ENCODE measurements at regions of chr2 and their contacts with region 1.

Region 1: DNA sequence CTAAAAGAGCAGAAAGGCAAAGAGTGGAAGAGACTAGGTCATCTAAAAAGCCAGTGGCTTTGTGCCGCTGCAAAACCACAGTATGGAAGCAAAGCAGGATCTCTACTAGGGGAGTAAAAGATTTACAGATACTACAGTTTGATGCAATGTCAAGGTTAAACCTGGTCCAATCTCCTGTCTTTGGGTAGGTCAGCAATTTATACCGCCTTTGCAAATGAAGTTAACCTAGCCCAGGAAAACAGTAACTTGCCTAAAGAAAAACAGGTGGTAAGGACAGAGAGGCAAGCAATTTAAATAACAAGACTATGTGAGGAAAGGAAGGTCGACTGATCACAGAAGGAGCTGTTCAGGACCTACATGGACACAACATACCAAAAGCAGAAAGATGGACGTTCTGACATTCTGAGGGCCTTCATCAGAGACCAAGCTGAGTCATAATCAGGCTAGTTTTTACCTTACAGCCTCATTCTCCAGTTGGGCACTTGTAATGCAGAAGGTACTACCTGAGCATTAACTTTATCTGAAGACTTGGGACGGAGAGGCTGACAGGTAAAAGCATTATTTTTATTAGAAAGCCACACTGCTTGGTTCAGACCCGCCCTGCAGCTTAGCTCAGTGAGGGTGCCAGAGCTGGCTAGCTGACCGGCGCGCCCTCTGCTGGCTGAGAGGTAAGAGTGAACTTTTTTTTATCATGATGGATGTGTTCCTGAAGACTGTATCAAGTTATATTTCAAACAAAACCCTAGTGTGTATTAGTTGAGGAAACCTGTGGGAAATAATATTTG is 15.9 kb downstream of the CDKL4 start:
- DNase-seq: peak; percentile 92
- ATAC-seq: peak; percentile 86

Region 2: GRCh38 chr2:38947240-38948239 is 280.3 kb before region 1 on chr2:
- intact Hi-C with region 1: loop called (anchors 1 kb)
- DNase-seq: peak; percentile 76
- ATAC-seq: peak; percentile 63

Region 3: DNA sequence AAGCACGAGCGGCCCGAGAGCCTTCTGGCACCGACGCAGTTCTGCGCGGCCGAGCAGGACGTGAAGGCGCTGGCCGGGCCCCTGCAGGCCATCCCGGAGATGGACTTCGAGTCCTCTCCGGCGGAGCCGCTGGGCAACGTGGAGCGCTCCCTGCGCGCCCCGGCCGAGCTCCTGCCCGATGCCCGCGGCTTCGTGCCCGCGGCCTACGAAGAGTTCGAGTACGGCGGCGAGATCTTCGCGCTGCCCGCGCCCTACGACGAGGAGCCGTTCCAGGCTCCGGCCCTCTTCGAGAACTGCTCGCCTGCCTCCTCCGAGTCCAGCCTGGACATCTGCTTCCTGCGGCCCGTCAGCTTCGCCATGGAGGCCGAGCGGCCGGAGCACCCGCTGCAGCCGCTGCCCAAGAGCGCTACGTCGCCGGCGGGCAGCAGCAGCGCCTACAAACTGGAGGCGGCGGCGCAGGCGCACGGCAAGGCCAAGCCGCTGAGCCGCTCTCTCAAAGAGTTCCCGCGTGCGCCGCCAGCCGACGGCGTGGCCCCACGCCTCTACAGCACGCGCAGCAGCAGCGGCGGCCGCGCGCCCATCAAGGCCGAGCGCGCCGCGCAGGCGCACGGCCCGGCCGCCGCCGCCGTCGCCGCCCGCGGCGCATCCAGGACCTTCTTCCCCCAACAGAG is 267.7 kb before region 1 on chr2:
- intact Hi-C with region 1: no loop called
- DNase-seq: peak; percentile 93
- ATAC-seq: peak; percentile 96

Region 4: GRCh38 chr2:39059366-39059952 is 168.4 kb before region 1 on chr2:
- intact Hi-C with region 1: loop called (anchors 1 kb)
- DNase-seq: no peak
- ATAC-seq: no peak

Region 5: DNA sequence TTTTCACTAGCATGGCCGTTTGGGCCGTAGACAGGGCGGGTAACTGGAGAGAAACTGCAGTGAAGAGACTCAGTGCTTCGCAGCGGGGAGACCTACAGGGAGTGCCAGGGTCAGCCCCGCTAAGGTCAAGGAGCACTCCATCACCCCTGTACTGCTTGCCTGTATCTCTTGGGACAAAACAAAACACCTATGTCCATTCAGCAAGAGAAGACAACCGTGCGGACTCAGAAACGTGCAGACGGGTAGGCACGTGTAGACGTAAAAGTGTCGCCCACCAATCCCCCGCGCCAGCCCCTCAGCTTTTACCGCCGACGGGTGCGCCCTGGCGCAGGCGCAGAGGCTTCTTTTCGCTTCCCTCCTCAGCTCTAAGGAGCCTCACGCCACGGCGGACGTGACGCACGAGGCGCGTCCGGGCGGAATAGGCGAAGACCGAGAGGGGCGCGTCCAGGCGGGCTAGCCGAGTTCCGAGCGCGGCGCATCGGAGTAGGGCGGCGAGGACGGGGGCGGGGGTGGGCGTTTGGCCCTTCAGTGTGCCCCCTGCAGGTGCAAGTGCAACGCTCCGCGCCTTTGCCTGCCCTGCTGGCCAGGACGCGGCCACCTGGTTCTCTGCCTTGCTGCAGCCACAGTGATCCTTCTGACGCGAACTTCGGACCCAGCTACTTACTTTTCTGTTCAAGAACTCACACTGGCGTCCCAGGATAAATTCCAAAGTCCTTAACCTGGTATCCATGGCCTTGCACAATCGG is 103.6 kb before region 1 on chr2:
- intact Hi-C with region 1: loop called (anchors 1 kb)
- DNase-seq: peak; percentile 98
- ATAC-seq: peak; percentile 92

Region 6: DNA sequence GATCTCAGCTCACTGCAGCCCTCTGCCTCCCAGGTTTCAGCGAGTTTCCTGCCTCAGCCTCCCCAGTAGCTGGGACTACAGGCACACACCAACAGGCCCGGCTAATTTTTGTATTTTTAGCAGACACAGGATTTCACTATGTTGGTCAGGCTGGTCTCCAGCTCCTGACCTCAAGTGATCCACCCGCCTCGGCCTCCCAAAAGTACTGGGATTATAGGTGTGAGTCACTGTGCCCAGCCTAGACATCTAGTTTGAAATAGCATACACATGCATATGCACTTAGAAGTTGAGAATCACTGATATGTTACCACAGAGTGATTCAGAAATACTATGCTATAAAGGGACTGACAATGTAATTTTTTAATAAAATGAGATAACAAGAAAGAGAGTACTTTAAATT is 85.8 kb after region 1 on chr2:
- intact Hi-C with region 1: no loop called
- DNase-seq: no peak
- ATAC-seq: no peak